ENCODE measurements at regions of chr5 and their contacts with region 1.

Region 1: GRCh38 chr5:146426853-146427618 is 20.1 kb upstream of the TCERG1 start:
- DNase-seq: peak; percentile 44
- H3K4me3 ChIP-seq: no peak overlapping the region
- H3K27ac ChIP-seq: no peak overlapping the region
- H3K4me1 ChIP-seq: no peaks in the 10 kb centered on the region
- H3K27me3 ChIP-seq: peaks cover 8 to 10% of the 10 kb centered on the region in 2 experiments
- CTCF ChIP-seq: peak; percentile 37 to 45
- POLR2A ChIP-seq: no peak

Region 2: GRCh38 chr5:146291421-146292074 is 135.5 kb before region 1 on chr5:
- CTCF ChIA-PET with region 1: interaction called, 4 read pairs
- POLR2A ChIA-PET with region 1: no interaction called
- dilution Hi-C with region 1: no loop called
- intact Hi-C with region 1: loop called (anchors 1 kb)
- DNase-seq: peak; percentile 47
- H3K4me3 ChIP-seq: no peak overlapping the region
- H3K27ac ChIP-seq: no peak overlapping the region
- H3K4me1 ChIP-seq: no peaks in the 10 kb centered on the region
- H3K27me3 ChIP-seq: no peaks in the 10 kb centered on the region
- CTCF ChIP-seq: peak; percentile 45 to 48
- POLR2A ChIP-seq: no peak

Region 3: DNA sequence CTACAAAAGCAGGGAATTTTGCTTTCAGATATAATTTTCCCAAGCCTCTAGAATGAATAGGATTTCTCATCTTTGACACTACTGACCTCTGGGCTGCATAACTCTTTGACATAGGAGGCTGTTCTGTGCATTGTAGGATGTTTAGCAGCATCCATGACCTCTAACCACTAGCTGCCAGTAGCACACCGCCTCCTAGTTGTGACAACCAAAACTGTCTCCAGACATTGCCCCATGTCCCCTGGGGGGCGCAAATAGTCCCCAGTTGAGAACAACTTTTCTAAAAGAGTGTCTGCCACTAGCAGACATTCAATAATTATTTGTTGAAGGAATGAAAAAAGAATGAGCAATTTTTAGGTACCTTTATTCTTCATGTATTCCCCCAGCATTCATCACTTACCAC is 36.6 kb before region 1 on chr5:
- CTCF ChIA-PET with region 1: no interaction called
- POLR2A ChIA-PET with region 1: no interaction called
- dilution Hi-C with region 1: no loop called
- intact Hi-C with region 1: no loop called
- DNase-seq: no peak
- H3K4me3 ChIP-seq: no peak overlapping the region
- H3K27ac ChIP-seq: no peak overlapping the region
- H3K4me1 ChIP-seq: no peaks in the 10 kb centered on the region
- H3K27me3 ChIP-seq: peaks cover 4% of the 10 kb centered on the region in 2 experiments
- CTCF ChIP-seq: no peak
- POLR2A ChIP-seq: no peak

Region 4: GRCh38 chr5:146484714-146485391 is 57.8 kb after region 1 on chr5:
- CTCF ChIA-PET with region 1: no interaction called
- POLR2A ChIA-PET with region 1: no interaction called
- dilution Hi-C with region 1: no loop called
- intact Hi-C with region 1: no loop called
- DNase-seq: no peak
- H3K4me3 ChIP-seq: no peak overlapping the region
- H3K27ac ChIP-seq: no peak overlapping the region
- H3K4me1 ChIP-seq: no peaks in the 10 kb centered on the region
- H3K27me3 ChIP-seq: no peaks in the 10 kb centered on the region
- CTCF ChIP-seq: no peak
- POLR2A ChIP-seq: no peak

Measured in endothelial cell of umbilical vein (primary cell).